Activated naive CD4-positive, alpha-beta T cell treated with anti-CD3 and anti-CD28 coated beads for 36 hours (primary cell): ENCODE measurements at regions of chr15 and their contacts with region 1.

Region 1: DNA sequence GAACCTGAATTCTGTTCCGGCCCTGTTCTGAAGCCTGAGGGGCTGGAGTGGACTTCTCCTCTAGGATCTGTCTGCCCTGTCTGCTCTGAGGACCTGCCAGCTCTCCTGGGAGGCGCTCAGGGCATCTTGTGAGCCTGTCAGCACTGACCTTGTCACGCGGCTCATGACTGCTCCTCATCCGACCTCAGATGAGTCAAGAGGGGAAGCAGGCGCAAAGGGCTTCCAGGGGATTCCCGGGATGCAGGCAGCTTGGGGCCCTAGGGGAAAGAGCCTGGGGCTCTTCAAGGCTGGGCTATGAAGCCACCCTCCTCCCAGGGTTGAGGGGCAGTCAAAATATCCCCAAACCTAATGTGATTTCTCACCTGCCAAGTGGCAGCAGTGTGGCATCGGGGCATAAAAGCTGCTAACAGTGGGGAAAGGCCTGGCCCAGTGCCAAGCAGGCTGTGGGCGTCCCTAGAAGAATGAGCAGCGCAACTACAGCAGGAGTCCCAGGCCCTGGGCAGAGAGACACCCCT is 27.6 kb upstream of the ANKDD1A start:
- DNase-seq: peak; percentile 92
- H3K4me3 Mint-ChIP-seq: peak overlapping the region; percentile 63
- H3K27ac Mint-ChIP-seq: peak overlapping the region; percentile 93
- H3K4me1 Mint-ChIP-seq: peaks cover 27% of the 10 kb centered on the region
- H3K27me3 Mint-ChIP-seq: no peaks in the 10 kb centered on the region

Region 2: GRCh38 chr15:64681424-64682024 is 202.5 kb before region 1 on chr15:
- CTCF ChIA-PET with region 1: no interaction called
- intact Hi-C with region 1: no loop called
- DNase-seq: peak; percentile 38
- H3K4me3 Mint-ChIP-seq: no peak overlapping the region
- H3K27ac Mint-ChIP-seq: no peak overlapping the region
- H3K4me1 Mint-ChIP-seq: peaks cover 2% of the 10 kb centered on the region
- H3K27me3 Mint-ChIP-seq: no peaks in the 10 kb centered on the region

Region 3: GRCh38 chr15:64841258-64842095 is 42.6 kb before region 1 on chr15 and contains the start of gene PLEKHO2:
- CTCF ChIA-PET with region 1: interaction called, 4 read pairs
- intact Hi-C with region 1: loop called (anchors 1 kb)
- DNase-seq: peak; percentile 95
- H3K4me3 Mint-ChIP-seq: peak within 1 kb of the TSS; percentile 96
- H3K27ac Mint-ChIP-seq: peak within 1 kb of the TSS; percentile 83
- H3K4me1 Mint-ChIP-seq: peaks cover 60% of the 10 kb centered on the region
- H3K27me3 Mint-ChIP-seq: no peaks in the 10 kb centered on the region
- total RNA-seq, gene PLEKHO2: 12.5 to 12.7 TPM

Region 4: DNA sequence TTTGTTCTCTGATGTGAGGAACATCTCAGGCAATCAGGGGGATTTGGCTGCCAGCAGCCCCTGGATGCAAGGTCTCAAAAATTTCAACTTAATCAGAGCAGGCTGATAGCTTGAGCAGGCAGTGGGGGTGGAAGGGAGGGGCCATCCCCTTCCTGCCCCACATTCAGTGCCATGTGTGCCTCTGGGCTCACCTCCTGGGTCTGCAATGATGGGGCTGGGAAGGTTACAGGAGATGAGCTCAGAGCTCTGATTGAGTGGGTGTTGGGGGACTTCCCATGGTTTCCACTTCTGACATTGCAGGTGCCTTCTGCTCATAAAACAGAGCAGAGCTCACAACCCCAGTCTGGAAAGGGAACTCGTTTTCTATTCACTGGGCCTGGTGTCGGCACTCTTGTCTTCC is 365.6 kb after region 1 on chr15:
- CTCF ChIA-PET with region 1: no interaction called
- intact Hi-C with region 1: no loop called
- DNase-seq: peak; percentile 96
- H3K4me3 Mint-ChIP-seq: peak overlapping the region; percentile 4
- H3K27ac Mint-ChIP-seq: peak overlapping the region; percentile 78
- H3K4me1 Mint-ChIP-seq: peaks cover 24% of the 10 kb centered on the region
- H3K27me3 Mint-ChIP-seq: no peaks in the 10 kb centered on the region